ENCODE measurements at regions of chr17 and their contacts with region 1.

Region 1: DNA sequence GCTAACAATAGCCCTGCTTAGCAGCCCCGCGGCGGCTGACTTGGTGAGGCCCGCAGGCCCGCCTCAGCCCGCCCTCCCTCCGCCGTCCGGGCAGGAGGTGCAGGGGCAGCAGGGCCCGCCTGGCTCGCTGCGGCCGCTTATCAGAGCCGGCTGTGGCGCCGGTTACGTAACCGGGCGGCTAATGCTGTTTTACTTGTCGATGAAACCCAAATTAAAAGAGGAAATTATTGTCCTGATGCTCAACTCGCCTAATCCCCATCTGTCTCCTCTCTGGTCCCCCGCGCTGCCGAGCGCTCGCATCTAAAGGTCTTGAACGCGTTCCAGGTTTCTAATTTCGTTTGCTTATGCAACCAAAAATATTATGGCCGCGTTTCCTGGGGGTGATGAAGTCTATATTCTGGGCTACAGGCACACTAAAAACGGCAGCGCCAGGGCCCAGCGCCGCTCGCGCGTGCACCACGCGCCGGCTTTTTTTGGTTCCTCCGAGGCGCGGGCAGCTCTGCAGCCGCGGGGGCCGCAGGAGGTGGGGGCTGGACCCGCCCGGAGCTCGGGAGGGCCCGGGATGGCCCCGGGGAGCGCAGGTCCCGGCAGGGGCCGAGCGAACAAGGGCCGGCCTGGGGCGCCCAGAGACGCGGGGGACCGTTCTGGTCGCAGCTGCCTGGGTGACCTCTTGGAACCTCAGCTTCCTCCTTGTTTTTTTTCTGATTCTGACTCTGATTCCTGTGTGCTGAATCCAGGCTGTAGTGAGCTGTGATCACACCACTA is 65.2 kb upstream of the TOB1 start:
- DNase-seq: peak; percentile 57 to 68 (median 61)
- H3K4me3 ChIP-seq: peak overlapping the region in 1 of 2 donors; percentile 45
- H3K4me3 Mint-ChIP-seq: peak overlapping the region; percentile 86 to 95 (median 88)
- H3K27ac ChIP-seq: peak overlapping the region; percentile 49
- H3K27ac Mint-ChIP-seq: peak overlapping the region; percentile 75 to 99 (median 96)
- H3K4me1 ChIP-seq: peaks cover 35% of the 10 kb centered on the region
- H3K4me1 Mint-ChIP-seq: peaks cover 14 to 63% (median 36%) of the 10 kb centered on the region in 4 donors
- H3K27me3 ChIP-seq: no peaks in the 10 kb centered on the region
- H3K27me3 Mint-ChIP-seq: no peaks in the 10 kb centered on the region

Region 2: DNA sequence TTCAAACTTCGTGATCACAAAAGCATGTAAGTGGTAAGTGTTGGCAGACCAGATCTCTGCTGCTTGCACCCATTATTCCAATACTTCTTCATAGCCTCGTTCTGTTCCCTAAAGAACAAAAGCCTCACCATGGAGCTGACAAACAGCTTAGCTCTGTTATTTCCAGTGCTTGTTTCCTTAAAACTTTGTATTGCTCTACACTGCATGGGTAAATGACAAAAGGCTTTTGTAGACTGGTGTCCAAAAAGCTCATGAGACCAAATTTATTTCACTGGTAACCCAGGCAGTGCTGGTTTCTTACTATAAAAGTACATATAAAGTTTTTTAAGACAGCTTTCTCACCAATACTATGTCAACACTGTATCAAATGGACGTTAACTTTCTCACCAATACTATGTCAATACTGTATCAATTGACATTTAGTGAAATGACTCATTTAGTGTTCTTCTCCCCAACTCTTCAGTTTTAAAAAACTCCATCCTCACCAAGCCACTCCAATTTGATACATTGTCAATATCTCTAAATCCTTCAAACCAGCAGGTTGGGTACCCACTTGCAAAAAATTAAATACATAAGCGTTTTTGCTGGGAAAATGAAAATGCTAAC is 70.2 kb before region 1 on chr17:
- CTCF ChIA-PET with region 1: interaction called, 4 read pairs
- POLR2A ChIA-PET with region 1: interaction called, 688 read pairs
- intact Hi-C with region 1: loop called (anchors 1 kb)
- DNase-seq: no peak
- H3K4me3 ChIP-seq: no peak overlapping the region
- H3K4me3 Mint-ChIP-seq: peak overlapping the region in 4 of 8 donors; percentile 1 to 49 (median 47)
- H3K27ac ChIP-seq: no peak overlapping the region
- H3K27ac Mint-ChIP-seq: peak overlapping the region in 5 of 7 donors; percentile 6 to 92 (median 34)
- H3K4me1 ChIP-seq: peaks cover 36% of the 10 kb centered on the region
- H3K4me1 Mint-ChIP-seq: peaks cover 24 to 43% (median 30%) of the 10 kb centered on the region in 4 donors
- H3K27me3 ChIP-seq: no peaks in the 10 kb centered on the region
- H3K27me3 Mint-ChIP-seq: no peaks in the 10 kb centered on the region

Region 3: DNA sequence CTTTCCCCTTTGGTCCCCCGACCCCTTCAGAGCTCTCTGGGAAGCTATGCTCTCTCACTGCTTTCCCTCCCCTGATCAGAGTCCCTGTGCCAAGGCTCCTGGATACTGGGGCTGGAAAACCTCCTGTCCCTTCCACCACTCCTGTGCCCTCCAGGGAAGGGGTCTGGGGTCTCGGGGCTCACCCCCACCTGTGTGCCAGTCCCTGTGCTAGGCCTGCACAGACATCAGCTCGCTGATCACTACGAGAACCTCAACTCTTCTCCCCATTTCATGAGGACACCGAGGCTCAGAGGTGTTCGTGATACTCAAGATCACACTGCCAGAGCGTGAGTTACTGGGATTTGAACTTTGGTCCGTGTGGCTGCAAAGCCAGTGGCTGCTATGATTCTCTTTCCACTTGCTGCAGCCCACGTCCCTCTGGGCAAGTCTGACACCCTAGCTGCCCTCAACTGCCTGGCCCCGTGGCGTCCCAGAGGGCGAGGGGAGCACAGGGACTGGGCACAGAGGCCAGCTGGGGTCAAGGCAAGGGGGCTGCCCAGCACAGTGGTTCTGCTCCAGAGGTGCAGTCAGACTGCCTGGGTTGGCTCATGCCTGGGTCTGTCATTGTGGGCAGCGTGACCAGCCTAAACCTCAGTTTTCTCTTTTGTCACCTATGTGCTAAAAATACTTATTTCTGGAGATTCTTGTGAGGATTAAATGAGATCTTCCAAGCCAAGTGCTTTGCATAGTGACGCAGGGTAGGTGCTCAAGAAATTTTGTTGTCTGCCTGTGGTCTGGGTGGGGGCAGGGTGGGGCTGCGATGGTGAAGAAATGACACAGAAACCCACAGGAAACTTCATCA is 21.3 kb before region 1 on chr17:
- CTCF ChIA-PET with region 1: interaction called, 6 read pairs
- POLR2A ChIA-PET with region 1: interaction called, 28 read pairs
- intact Hi-C with region 1: loop called (anchors 2 kb)
- DNase-seq: peak in 4 of 5 donors; percentile 76 to 93 (median 82)
- H3K4me3 ChIP-seq: peak overlapping the region in 1 of 2 donors; percentile 30
- H3K4me3 Mint-ChIP-seq: peak overlapping the region in 7 of 8 donors; percentile 46 to 89 (median 73)
- H3K27ac ChIP-seq: peak overlapping the region; percentile 84
- H3K27ac Mint-ChIP-seq: peak overlapping the region; percentile 96 to 99 (median 99)
- H3K4me1 ChIP-seq: peaks cover 75% of the 10 kb centered on the region
- H3K4me1 Mint-ChIP-seq: peaks cover 37 to 73% (median 54%) of the 10 kb centered on the region in 4 donors
- H3K27me3 ChIP-seq: no peaks in the 10 kb centered on the region
- H3K27me3 Mint-ChIP-seq: no peaks in the 10 kb centered on the region

Region 4: GRCh38 chr17:50919321-50920085 is 11.8 kb before region 1 on chr17:
- CTCF ChIA-PET with region 1: interaction called, 3 read pairs
- POLR2A ChIA-PET with region 1: interaction called, 18 read pairs
- intact Hi-C with region 1: no loop called
- DNase-seq: peak; percentile 86 to 97 (median 92)
- H3K4me3 ChIP-seq: peak overlapping the region; percentile 14 to 27
- H3K4me3 Mint-ChIP-seq: peak overlapping the region; percentile 50 to 89 (median 75)
- H3K27ac ChIP-seq: peak overlapping the region; percentile 75
- H3K27ac Mint-ChIP-seq: peak overlapping the region; percentile 97 to 99 (median 99)
- H3K4me1 ChIP-seq: peaks cover 39% of the 10 kb centered on the region
- H3K4me1 Mint-ChIP-seq: peaks cover 15 to 56% (median 38%) of the 10 kb centered on the region in 4 donors
- H3K27me3 ChIP-seq: no peaks in the 10 kb centered on the region
- H3K27me3 Mint-ChIP-seq: no peaks in the 10 kb centered on the region

Region 5: GRCh38 chr17:50944054-50944901 is 13.0 kb after region 1 on chr17:
- CTCF ChIA-PET with region 1: interaction called, 4 read pairs
- POLR2A ChIA-PET with region 1: interaction called, 34 read pairs
- intact Hi-C with region 1: loop called (anchors 1 kb)
- DNase-seq: peak; percentile 73 to 82 (median 76)
- H3K4me3 ChIP-seq: peak overlapping the region; percentile 46 to 49
- H3K4me3 Mint-ChIP-seq: peak overlapping the region; percentile 79 to 88 (median 84)
- H3K27ac ChIP-seq: peak overlapping the region; percentile 73
- H3K27ac Mint-ChIP-seq: peak overlapping the region; percentile 87 to 94 (median 93)
- H3K4me1 ChIP-seq: peaks cover 40% of the 10 kb centered on the region
- H3K4me1 Mint-ChIP-seq: peaks cover 21 to 52% (median 36%) of the 10 kb centered on the region in 4 donors
- H3K27me3 ChIP-seq: no peaks in the 10 kb centered on the region
- H3K27me3 Mint-ChIP-seq: no peaks in the 10 kb centered on the region